ENCODE measurements at regions of chr15 and their contacts with region 1.

Region 1: GRCh38 chr15:92633418-92633817 is 22.2 kb downstream of the FAM174B start:
- DNase-seq: peak in 1 of 2 donors; percentile 33
- H3K4me3 ChIP-seq: no peak overlapping the region
- H3K27ac ChIP-seq: peak overlapping the region in 1 of 2 donors; percentile 91
- H3K4me1 ChIP-seq: peaks cover 6 to 9% of the 10 kb centered on the region in 2 donors
- H3K27me3 ChIP-seq: no peaks in the 10 kb centered on the region
- CTCF ChIP-seq: no peak
- POLR2A ChIP-seq: no peak

Region 2: GRCh38 chr15:92611993-92612745 is 21.2 kb before region 1 on chr15:
- intact Hi-C with region 1: loop called (anchors 1 kb)
- DNase-seq: peak in 1 of 2 donors; percentile 15
- H3K4me3 ChIP-seq: no peak overlapping the region
- H3K27ac ChIP-seq: no peak overlapping the region
- H3K4me1 ChIP-seq: no peaks in the 10 kb centered on the region
- H3K27me3 ChIP-seq: no peaks in the 10 kb centered on the region
- CTCF ChIP-seq: no peak
- POLR2A ChIP-seq: no peak

Region 3: GRCh38 chr15:92683232-92683834 is 49.9 kb after region 1 on chr15:
- intact Hi-C with region 1: no loop called
- DNase-seq: no peak
- H3K4me3 ChIP-seq: no peak overlapping the region
- H3K27ac ChIP-seq: peak overlapping the region; percentile 61 to 85
- H3K4me1 ChIP-seq: no peaks in the 10 kb centered on the region
- H3K27me3 ChIP-seq: no peaks in the 10 kb centered on the region
- CTCF ChIP-seq: peak in 2 of 3 donors; percentile 56 to 67
- POLR2A ChIP-seq: no peak

Region 4: DNA sequence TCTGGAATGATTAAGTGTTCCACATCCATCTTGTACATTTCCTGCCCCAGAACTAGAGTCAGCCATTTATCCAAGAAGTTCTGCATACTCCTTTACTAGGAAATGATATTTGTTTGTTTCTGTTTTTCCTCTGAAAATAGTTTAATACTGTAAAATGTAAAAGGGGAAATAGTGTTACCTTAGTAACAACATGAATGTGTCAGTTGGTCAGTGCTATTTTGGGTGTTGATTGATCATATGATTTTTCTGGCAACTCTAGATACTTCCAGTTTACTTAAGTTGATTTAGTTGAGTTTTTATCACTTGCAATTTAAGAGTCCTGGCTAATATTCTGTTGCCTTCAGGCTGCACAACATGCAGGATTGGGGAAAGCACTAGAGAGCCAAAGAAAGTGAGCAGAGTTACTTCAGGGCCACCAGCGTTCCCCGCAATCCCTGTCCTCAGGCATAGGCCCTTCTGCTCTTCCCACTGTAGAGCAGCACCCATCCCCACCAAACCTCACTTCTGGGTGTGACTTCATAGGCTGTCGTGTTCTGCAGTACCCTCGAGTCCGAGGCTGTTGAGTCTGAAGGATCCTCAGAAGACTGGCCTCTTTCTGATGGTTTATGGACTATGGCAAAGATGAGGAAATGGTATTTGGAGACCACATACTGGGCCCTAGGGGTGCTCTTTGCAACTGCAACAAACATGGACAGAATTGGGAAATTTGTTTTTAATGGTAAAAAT is 335.7 kb after region 1 on chr15:
- intact Hi-C with region 1: no loop called
- DNase-seq: no peak
- H3K4me3 ChIP-seq: no peak overlapping the region
- H3K27ac ChIP-seq: peak overlapping the region in 1 of 2 donors; percentile 29
- H3K4me1 ChIP-seq: no peaks in the 10 kb centered on the region
- H3K27me3 ChIP-seq: no peaks in the 10 kb centered on the region
- CTCF ChIP-seq: no peak
- POLR2A ChIP-seq: no peak